Motor neuron (in vitro differentiated cells): ENCODE measurements at regions of chr3 and their contacts with region 1.

Region 1: DNA sequence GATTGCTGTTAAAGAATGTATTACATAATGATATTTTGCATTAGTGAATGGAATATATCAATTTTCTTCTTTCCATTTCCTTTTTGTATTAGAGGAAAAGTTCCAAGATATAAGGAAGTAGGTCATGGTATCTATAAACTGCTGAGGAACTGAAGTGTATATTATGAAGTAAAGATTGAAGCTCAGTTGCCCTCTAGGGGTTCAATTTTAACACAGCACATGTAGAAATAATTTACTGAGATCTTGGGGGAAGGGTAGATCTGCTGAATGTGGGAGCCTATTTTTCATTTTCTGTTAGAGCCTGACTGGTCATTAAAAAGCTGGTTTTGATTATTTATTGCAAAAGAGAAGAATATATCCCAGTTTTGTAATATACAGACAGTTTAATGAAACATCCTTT is 45.2 kb downstream of the CMC1 start:
- ATAC-seq: peak in 7 of 8 experiments; percentile 27 to 94 (median 71)
- H3K4me3 ChIP-seq: no peak overlapping the region
- H3K27ac ChIP-seq: no peak overlapping the region
- H3K4me1 ChIP-seq: no peaks in the 10 kb centered on the region

Region 2: GRCh38 chr3:27943106-27943505 is 343.5 kb before region 1 on chr3:
- in situ Hi-C with region 1: loop called in 1 of 9 experiments (anchors 25 kb)
- ATAC-seq: peak in 2 of 8 experiments; percentile 39 to 78
- H3K4me3 ChIP-seq: no peak overlapping the region
- H3K27ac ChIP-seq: no peak overlapping the region
- H3K4me1 ChIP-seq: peaks cover 0 to 4% of the 10 kb centered on the region in 2 donors